Caco-2 (cell line): ENCODE measurements at regions of chr11 and their contacts with region 1.

Region 1: DNA sequence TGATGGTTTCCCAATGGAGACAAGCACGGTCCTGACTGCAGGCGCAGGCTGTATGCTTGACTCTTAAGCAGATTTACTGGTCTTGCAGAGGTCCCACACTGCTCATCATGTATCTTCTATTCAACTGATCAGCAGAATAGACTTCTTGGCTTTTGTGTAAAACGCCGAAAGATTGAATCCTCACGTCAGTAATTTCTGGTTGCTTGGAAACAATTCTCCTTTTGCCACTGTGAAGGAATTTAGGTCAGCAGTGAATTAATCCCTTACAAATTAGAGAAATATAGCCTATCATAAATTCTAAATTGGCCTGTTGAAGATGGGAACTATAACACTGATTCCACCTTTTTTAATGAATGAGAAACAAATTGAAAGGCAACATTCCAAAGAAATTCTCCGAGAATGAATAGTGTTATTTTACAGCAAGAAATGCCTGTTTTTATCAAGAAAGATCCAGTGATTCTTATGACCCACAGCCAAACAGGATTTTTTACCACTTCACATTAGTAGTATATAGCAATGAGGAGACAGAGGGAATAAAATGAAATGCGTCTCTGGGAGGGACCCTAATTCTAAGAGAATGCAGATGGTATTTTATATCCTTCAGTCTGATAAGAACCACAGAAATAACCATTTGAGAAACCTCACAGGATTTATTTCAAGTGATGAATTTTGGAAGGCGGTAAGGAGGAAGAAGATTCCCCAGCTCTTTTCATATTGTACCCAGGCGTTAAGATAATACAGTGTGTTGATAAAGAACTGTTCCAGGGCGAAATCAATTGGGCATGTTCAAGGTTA is 362.5 kb downstream of the RAB38 start:
- DNase-seq: no peak
- H3K4me3 ChIP-seq: no peak overlapping the region
- H3K4me3 Mint-ChIP-seq: no peak overlapping the region
- H3K27ac Mint-ChIP-seq: no peak overlapping the region
- H3K4me1 ChIP-seq: peaks cover 15% of the 10 kb centered on the region
- H3K4me1 Mint-ChIP-seq: peaks cover 24% of the 10 kb centered on the region
- H3K27me3 ChIP-seq: no peaks in the 10 kb centered on the region
- H3K27me3 Mint-ChIP-seq: no peaks in the 10 kb centered on the region
- CTCF ChIP-seq: no peak

Region 2: GRCh38 chr11:87722756-87723565 is 89.8 kb before region 1 on chr11:
- CTCF ChIA-PET with region 1: no interaction called
- POLR2A ChIA-PET with region 1: no interaction called
- intact Hi-C with region 1: loop called (anchors 2 kb)
- DNase-seq: peak; percentile 54 to 65
- H3K4me3 ChIP-seq: no peak overlapping the region
- H3K4me3 Mint-ChIP-seq: no peak overlapping the region
- H3K27ac Mint-ChIP-seq: no peak overlapping the region
- H3K4me1 ChIP-seq: peaks cover 7% of the 10 kb centered on the region
- H3K4me1 Mint-ChIP-seq: peaks cover 7% of the 10 kb centered on the region
- H3K27me3 ChIP-seq: no peaks in the 10 kb centered on the region
- H3K27me3 Mint-ChIP-seq: peaks cover 3% of the 10 kb centered on the region
- CTCF ChIP-seq: peak; percentile 96

Region 3: DNA sequence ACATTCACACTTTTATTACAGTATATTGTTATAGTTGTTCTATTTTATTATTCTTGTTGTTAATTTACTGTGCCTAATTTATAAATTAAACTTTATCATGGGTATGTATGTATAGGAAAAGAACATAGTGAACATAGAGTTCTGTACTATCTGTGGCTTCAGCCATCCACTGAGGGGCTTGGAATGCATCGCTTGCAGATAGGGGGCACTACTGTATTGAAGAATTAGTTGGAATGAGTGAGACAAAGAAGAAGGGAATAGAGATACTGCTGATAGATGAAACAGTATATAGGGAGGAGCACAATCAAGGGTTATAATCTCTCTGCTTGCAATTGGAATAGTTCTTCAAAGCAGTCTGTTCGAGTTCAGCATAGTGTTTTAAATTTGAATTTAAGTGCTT is 69.8 kb before region 1 on chr11:
- CTCF ChIA-PET with region 1: no interaction called
- POLR2A ChIA-PET with region 1: no interaction called
- intact Hi-C with region 1: loop called (anchors 5 kb)
- DNase-seq: peak in 1 of 2 experiments; percentile 39
- H3K4me3 ChIP-seq: no peak overlapping the region
- H3K4me3 Mint-ChIP-seq: no peak overlapping the region
- H3K27ac Mint-ChIP-seq: no peak overlapping the region
- H3K4me1 ChIP-seq: no peaks in the 10 kb centered on the region
- H3K4me1 Mint-ChIP-seq: peaks cover 7% of the 10 kb centered on the region
- H3K27me3 ChIP-seq: no peaks in the 10 kb centered on the region
- H3K27me3 Mint-ChIP-seq: no peaks in the 10 kb centered on the region
- CTCF ChIP-seq: peak; percentile 33 to 49

Region 4: DNA sequence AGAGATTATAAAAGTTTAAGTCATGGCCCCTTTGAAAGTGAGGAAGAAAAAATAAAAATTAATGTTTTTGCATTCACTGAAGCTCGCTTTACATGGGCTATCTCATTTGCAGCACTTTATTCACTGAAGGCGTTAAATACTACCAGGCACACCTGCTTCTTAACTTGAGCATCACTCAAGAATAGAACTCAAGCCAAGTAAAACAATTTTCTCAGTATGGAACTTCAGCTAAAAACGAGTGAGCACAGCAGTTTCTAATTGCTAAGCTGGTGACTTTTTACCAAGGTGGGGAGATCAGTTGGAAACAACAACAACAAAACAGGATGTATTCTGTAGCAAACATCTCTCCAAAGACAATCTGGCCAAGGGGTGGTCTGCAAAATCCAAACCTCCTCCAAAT is 43.1 kb before region 1 on chr11:
- CTCF ChIA-PET with region 1: no interaction called
- POLR2A ChIA-PET with region 1: no interaction called
- intact Hi-C with region 1: loop called (anchors 2 kb)
- DNase-seq: no peak
- H3K4me3 ChIP-seq: no peak overlapping the region
- H3K4me3 Mint-ChIP-seq: no peak overlapping the region
- H3K27ac Mint-ChIP-seq: no peak overlapping the region
- H3K4me1 ChIP-seq: no peaks in the 10 kb centered on the region
- H3K4me1 Mint-ChIP-seq: no peaks in the 10 kb centered on the region
- H3K27me3 ChIP-seq: no peaks in the 10 kb centered on the region
- H3K27me3 Mint-ChIP-seq: peaks cover 9% of the 10 kb centered on the region
- CTCF ChIP-seq: no peak